Activated CD4-positive, alpha-beta T cell treated with anti-CD3 and anti-CD28 coated beads for 36 hours (primary cell): ENCODE measurements at regions of chr7 and their contacts with region 1.

Region 1: GRCh38 chr7:2314209-2314955 is at the start of gene SNX8:
- DNase-seq: peak; percentile 97
- ATAC-seq: peak; percentile 89
- H3K4me3 Mint-ChIP-seq: no peak within 1 kb of the TSS
- H3K27ac Mint-ChIP-seq: peak within 1 kb of the TSS; percentile 62
- H3K4me1 Mint-ChIP-seq: peaks cover 8% of the 10 kb centered on the region
- H3K27me3 Mint-ChIP-seq: no peaks in the 10 kb centered on the region
- total RNA-seq, gene SNX8: 37.1 to 42.4 TPM

Region 2: DNA sequence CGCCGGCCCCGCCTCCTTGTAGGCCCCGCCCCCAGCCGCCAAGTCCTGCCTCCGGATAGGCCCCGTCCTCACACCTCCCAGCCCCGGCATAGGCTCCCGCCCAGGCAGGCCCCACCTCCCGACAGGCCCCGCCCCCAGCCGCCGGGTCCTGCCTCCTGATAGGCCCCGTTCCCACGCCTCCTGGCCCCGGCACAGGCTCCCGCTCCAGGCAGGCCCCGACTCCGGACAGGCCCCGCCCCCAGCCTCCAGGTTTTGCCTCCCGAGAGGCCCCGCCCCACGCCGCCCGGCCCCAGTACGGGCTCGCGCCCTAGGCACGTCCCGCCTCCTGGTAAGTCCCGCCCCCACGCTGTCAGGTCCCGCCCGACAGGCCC is 854.9 kb before region 1 on chr7:
- CTCF ChIA-PET with region 1: no interaction called
- POLR2A ChIA-PET with region 1: no interaction called
- intact Hi-C with region 1: loop called in 1 of 2 experiments (anchors 1 kb)
- DNase-seq: peak; percentile 100
- ATAC-seq: peak; percentile 98
- H3K4me3 Mint-ChIP-seq: peak overlapping the region; percentile 59
- H3K27ac Mint-ChIP-seq: no peak overlapping the region
- H3K4me1 Mint-ChIP-seq: peaks cover 7% of the 10 kb centered on the region
- H3K27me3 Mint-ChIP-seq: no peaks in the 10 kb centered on the region

Region 3: GRCh38 chr7:1569833-1570633 is 744.3 kb before region 1 on chr7 and contains the start of gene PSMG3:
- CTCF ChIA-PET with region 1: no interaction called
- POLR2A ChIA-PET with region 1: no interaction called
- intact Hi-C with region 1: loop called in 1 of 2 experiments (anchors 1 kb)
- DNase-seq: peak; percentile 94
- ATAC-seq: peak; percentile 95
- H3K4me3 Mint-ChIP-seq: peak within 1 kb of the TSS; percentile 86
- H3K27ac Mint-ChIP-seq: peak within 1 kb of the TSS; percentile 92
- H3K4me1 Mint-ChIP-seq: peaks cover 37% of the 10 kb centered on the region
- H3K27me3 Mint-ChIP-seq: no peaks in the 10 kb centered on the region
- total RNA-seq, gene PSMG3: 21.4 to 33.0 TPM

Region 4: GRCh38 chr7:2214636-2215035 is 99.7 kb before region 1 on chr7:
- CTCF ChIA-PET with region 1: no interaction called
- POLR2A ChIA-PET with region 1: no interaction called
- intact Hi-C with region 1: no loop called
- DNase-seq: peak; percentile 48
- ATAC-seq: peak; percentile 84
- H3K4me3 Mint-ChIP-seq: no peak overlapping the region
- H3K27ac Mint-ChIP-seq: no peak overlapping the region
- H3K4me1 Mint-ChIP-seq: peaks cover 6% of the 10 kb centered on the region
- H3K27me3 Mint-ChIP-seq: no peaks in the 10 kb centered on the region

Region 5: GRCh38 chr7:2232766-2233520 is 81.4 kb before region 1 on chr7 and contains the start of gene MAD1L1:
- CTCF ChIA-PET with region 1: no interaction called
- POLR2A ChIA-PET with region 1: no interaction called
- intact Hi-C with region 1: loop called in 1 of 2 experiments (anchors 1 kb)
- DNase-seq: peak; percentile 95
- ATAC-seq: peak; percentile 94
- H3K4me3 Mint-ChIP-seq: peak within 1 kb of the TSS; percentile 83
- H3K27ac Mint-ChIP-seq: peak within 1 kb of the TSS; percentile 86
- H3K4me1 Mint-ChIP-seq: peaks cover 26% of the 10 kb centered on the region
- H3K27me3 Mint-ChIP-seq: no peaks in the 10 kb centered on the region
- total RNA-seq, gene MAD1L1: 50.2 to 61.7 TPM

Region 6: DNA sequence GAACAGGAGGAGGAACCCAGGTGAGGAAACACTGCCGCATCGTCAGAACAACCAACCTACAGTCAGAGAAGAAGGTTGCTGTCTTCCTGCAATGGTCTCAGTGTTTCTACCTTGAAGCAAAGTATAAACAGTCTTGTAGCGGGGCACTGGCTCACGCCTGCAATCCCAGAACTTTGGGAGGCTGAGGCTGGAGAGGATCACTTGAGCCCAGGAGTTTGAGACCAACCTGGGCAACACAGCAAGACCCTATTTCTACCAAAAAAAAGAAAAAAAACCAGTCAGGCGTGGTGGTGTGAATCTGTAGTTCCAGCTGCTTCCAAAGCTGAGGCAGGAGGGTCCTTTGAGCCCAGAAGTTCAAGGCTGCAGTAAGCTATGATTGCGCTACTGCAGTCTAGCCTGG is 23.5 kb before region 1 on chr7:
- CTCF ChIA-PET with region 1: no interaction called
- POLR2A ChIA-PET with region 1: no interaction called
- intact Hi-C with region 1: no loop called
- DNase-seq: no peak
- ATAC-seq: no peak
- H3K4me3 Mint-ChIP-seq: no peak overlapping the region
- H3K27ac Mint-ChIP-seq: no peak overlapping the region
- H3K4me1 Mint-ChIP-seq: no peaks in the 10 kb centered on the region
- H3K27me3 Mint-ChIP-seq: no peaks in the 10 kb centered on the region

Region 7: DNA sequence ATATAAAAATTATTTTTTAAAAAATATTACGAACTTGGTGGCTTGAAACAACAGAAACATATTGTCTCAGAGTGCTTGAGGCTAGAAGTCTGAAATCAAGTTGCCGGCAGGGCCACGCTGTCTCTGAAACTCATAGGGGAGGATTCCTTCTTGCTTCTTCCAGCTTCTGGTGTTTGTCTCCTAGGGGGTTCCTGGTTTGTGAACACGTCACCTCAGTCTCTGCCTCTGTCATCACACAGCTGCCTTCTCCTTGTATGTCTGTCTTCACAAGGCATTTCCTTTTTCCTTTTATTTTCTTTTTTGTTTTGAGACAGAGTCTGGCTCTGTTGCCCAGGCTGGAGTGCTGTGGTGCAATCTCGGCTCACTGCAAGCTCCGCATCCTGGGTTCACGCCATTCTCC is 12.6 kb after region 1 on chr7:
- CTCF ChIA-PET with region 1: no interaction called
- POLR2A ChIA-PET with region 1: no interaction called
- intact Hi-C with region 1: no loop called
- DNase-seq: no peak
- ATAC-seq: no peak
- H3K4me3 Mint-ChIP-seq: no peak overlapping the region
- H3K27ac Mint-ChIP-seq: no peak overlapping the region
- H3K4me1 Mint-ChIP-seq: no peaks in the 10 kb centered on the region
- H3K27me3 Mint-ChIP-seq: no peaks in the 10 kb centered on the region

Region 8: DNA sequence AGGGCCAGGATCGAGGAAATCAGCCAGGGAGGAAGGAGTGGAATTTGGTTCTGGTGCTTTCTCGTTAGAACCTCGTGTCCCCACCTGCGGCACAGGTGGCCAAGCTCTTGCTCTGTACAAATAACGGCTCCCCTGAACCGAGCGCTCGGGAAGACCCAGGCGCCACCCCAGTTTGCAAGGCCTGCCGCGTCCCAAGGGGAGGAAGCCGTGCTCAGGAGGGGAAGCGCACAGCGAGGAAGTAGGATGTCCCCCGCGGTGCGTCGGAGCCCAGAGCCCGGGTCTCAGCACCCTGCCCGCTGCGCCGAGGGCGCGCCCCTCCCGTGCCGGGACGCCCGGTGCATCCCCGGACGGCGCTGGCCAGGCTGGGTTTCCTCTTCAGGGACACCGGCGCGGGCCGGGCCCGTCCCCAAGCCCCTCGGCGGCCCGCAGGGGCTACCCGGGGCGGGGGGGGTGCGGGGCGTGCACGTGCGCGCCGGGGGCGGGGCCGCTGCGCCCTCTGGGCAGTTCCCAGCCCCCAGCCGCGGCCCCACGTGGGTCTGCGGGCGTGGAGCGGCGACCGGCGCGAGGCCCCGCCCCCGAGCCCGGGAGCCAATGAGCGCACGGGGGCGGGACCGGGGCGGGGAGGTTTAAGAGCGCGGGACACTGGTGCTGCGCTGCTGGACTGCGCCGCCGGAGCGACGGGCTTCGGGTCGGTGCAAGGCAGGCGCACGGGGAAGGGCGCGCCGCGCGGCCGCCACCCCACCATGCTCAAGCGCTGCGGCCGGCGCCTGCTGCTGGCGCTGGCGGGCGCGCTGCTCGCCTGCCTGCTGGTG is 204.9 kb after region 1 on chr7 and contains the start of gene LFNG:
- CTCF ChIA-PET with region 1: no interaction called
- POLR2A ChIA-PET with region 1: no interaction called
- intact Hi-C with region 1: loop called in 1 of 2 experiments (anchors 1 kb)
- DNase-seq: peak; percentile 91
- ATAC-seq: peak; percentile 75
- H3K4me3 Mint-ChIP-seq: peak within 1 kb of the TSS; percentile 89
- H3K27ac Mint-ChIP-seq: peak within 1 kb of the TSS; percentile 73
- H3K4me1 Mint-ChIP-seq: peaks cover 32% of the 10 kb centered on the region
- H3K27me3 Mint-ChIP-seq: no peaks in the 10 kb centered on the region
- total RNA-seq, gene LFNG: 14.9 to 23.3 TPM